GM10248 (cell line): ENCODE measurements at regions of chr19 and their contacts with region 1.

Region 1: DNA sequence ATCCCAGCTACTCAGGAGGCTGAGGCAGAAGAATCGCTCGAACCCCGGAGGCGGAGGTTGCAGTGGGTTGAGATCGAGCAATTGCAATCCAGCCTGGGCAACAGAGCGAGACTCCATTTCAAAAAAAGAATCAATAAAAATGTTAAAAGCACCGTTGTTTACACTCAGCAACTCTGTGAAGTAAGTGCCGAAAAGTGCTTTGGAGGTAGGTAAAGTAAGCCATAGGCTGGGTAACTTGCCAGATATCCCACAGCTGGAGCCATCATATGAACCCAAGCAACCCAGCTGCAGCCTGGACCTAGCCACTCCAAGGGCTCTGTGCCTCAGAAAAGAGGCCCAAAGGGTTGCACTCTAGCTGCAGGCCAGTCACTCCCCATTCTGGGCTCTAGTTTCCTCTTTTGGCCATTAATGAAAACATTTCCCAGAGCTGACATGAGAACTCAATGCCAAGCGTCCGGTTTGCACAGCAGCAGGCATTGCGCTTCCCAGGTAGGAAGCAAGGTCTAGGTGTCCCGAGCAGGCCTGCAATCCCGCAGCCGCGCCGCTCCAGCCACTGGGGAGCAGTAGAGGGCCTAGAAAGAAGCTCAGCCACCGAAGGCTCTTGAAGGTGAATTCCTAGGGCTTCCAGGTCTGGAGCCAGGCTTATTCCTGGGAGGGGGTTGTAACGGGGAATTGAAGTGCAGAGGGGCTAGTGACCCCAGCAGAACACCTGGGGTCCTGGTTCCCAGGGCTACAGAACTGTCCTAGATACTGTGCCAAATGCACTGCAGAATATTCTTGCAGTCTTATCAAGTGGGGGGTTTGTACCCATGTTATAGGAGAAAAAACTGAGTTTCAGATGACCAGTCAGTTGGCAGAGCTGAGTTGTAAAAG is 4.1 kb upstream of the CD79A start:
- DNase-seq: no peak
- CTCF ChIP-seq: peak; percentile 96

Region 2: DNA sequence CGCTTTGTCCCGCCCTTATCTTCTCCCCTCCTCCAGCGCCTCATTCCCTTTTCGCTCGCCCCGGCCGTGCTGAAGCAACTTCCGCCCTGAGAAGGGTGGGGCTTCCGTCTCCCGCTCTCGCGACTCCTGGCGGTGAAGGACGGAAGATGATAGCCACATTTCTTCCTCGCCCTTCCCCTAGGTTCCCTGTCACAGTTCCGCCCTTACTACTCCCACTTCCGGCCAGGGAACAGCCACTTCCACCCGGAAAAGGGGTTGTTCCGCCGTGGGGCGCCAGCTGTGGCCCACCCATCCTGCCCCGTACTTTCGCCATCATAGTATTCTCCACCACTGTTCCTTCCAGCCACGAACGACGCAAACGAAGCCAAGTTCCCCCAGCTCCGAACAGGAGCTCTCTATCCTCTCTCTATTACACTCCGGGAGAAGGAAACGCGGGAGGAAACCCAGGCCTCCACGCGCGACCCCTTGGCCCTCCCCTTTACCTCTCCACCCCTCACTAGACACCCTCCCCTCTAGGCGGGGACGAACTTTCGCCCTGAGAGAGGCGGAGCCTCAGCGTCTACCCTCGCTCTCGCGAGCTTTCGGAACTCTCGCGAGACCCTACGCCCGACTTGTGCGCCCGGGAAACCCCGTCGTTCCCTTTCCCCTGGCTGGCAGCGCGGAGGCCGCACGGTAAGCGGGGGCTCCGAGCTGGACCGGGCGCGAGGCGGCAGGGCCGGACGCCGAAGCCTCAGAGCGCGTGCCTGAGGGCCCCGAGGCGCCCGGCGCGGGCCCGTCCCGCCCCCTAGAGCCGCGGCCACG is 13.2 kb before region 1 on chr19 and contains the start of gene RPS19:
- CTCF ChIA-PET with region 1: interaction called, 31 read pairs
- POLR2A ChIA-PET with region 1: interaction called, 31 read pairs
- DNase-seq: peak; percentile 97
- CTCF ChIP-seq: peak; percentile 30

Region 3: DNA sequence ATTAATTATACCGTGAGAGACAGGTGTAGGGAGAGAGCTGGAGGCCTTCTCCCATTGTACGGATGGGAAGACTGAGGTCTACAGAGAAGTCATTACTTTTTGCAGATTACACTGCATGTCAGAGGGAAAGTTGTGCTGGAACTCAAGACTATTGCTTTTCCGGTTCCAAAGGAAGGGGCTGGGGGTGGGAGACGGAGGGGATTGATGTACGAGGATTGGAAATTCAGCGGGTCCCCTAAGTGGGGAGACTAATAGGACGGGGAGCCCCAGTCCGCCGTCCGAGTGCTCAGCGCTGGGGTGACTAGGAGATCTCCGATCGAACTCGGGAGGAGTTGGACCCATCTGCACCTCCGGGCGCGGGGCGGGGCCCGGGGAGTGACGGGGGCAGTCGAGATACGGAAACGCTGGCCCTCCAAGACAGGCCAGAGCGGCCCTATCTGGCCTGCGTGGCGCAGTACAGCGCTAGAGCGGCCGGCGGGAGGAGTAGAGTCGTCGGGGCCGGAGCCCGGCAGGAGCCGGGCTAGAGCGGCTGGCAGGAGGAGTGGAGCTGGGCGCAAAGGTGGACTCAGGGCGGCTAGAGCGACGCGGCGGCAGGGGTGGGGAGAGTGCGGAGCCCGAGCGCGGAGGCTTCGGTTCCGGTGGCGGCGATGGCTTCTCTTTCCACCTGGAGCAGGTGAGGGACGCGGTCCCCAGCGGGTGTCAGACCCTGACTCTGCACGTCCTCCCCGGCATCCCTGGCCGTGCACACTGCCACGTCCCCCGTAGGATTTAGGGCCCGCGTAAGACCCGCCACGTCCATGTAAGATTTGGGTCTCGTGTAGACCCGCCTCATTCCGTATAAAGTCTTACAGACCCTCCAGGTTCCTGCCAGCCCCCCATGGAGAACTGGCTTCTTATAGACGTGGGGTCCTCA is 11.1 kb after region 1 on chr19:
- CTCF ChIA-PET with region 1: interaction called, 60 read pairs
- POLR2A ChIA-PET with region 1: interaction called, 7 read pairs
- DNase-seq: peak; percentile 93
- CTCF ChIP-seq: peak; percentile 8

Region 4: DNA sequence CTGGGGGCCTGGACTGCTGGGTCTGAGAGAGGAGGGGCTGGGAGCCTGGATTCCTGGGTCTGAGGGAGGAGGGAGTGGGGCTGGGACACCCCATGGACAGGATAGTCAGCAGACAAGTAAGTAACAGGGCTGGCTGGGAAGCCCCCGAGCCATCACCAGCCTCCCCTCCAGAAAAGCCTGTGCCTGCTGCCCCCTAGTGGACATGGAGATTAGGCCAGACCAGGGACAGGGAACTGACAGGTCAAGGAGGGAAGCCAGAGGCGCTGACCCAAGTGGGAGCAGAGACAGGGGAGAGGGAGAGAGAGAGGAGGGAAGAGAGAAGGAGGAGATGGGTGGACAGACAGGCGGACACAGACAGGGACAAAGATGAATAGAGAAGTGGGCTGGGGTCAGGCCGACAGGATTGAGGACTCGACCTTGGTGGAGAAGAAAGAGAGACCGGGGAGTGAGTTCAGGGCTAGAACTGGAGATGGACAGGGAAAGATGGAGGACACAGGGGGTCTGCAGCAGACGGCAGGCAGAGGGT is 61.9 kb after region 1 on chr19:
- CTCF ChIA-PET with region 1: interaction called, 35 read pairs
- POLR2A ChIA-PET with region 1: interaction called, 3 read pairs
- DNase-seq: peak; percentile 89
- CTCF ChIP-seq: peak; percentile 87

Region 5: GRCh38 chr19:41945135-41945766 is 72.2 kb after region 1 on chr19:
- CTCF ChIA-PET with region 1: interaction called, 52 read pairs
- POLR2A ChIA-PET with region 1: interaction called, 10 read pairs
- DNase-seq: peak; percentile 88
- CTCF ChIP-seq: no peak

Region 6: GRCh38 chr19:41951686-41952172 is 78.7 kb after region 1 on chr19:
- CTCF ChIA-PET with region 1: interaction called, 52 read pairs
- POLR2A ChIA-PET with region 1: interaction called, 13 read pairs
- DNase-seq: peak; percentile 85
- CTCF ChIP-seq: peak; percentile 99

Region 7: GRCh38 chr19:41959056-41960053 is 86.3 kb after region 1 on chr19 and contains the start of gene RABAC1:
- CTCF ChIA-PET with region 1: interaction called, 32 read pairs
- POLR2A ChIA-PET with region 1: interaction called, 13 read pairs
- DNase-seq: peak; percentile 95
- CTCF ChIP-seq: peak; percentile 32

Region 8: DNA sequence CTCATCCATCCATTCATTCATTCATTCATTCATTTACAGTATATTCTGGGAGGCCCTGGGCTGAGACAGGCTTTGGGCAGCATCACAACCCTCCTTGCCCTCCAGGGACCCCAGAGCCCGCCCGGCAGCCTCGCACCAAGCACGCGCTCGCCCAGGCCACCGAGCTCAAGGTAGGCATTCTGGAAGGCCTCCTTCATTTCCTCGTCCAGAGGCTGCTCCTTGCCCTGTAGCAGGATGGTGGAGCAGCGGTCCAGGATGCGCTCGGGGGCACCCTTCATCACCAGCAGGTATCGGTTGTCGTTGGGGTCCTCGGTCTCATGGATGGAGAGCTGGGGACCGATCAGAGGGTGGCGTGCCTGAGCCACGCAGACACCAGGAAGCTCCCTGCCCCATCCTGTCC is 105.5 kb after region 1 on chr19:
- CTCF ChIA-PET with region 1: no interaction called
- POLR2A ChIA-PET with region 1: no interaction called
- DNase-seq: no peak
- CTCF ChIP-seq: no peak